Naive thymus-derived CD4-positive, alpha-beta T cell (primary cell): ENCODE measurements at regions of chr9 and their contacts with region 1.

Region 1: DNA sequence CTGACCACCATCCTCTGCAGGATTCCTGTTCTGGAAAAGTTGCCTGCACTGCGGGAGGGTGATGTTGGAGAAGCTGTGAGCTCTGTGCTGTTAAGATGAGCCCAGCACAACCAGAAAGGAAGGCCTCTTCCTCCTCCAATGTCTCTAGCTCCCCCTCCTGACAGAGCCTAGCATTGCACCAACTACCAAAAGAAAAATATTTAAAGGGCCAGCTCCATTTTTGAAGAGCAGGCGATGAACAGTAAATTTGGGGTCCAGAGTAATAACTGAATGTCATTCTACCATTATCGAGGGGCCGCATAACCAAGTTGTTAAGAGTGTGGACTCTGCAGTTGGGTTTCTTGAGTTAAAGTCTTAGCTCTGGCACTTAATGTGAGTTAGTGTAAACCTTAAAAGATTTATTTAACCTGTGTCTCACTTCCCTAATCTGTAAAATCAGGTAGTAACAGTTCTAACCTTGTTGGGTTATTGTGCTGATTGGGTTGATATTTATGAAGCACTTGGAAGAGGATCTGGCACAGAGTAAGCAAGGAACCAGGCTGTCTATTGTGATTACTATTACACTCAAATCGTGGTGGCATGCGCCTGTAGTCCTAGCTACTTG is 3.9 kb downstream of the TEX53 start:
- DNase-seq: peak; percentile 56 to 88 (median 81)
- ATAC-seq: peak; percentile 99
- H3K4me3 ChIP-seq: no peak overlapping the region
- H3K4me3 Mint-ChIP-seq: no peak overlapping the region
- H3K27ac ChIP-seq: no peak overlapping the region
- H3K27ac Mint-ChIP-seq: peak overlapping the region in 7 of 9 donors; percentile 16 to 81 (median 56)
- H3K4me1 ChIP-seq: peaks cover 0 to 23% of the 10 kb centered on the region in 2 donors
- H3K4me1 Mint-ChIP-seq: peaks cover 11 to 25% (median 21%) of the 10 kb centered on the region in 7 donors
- H3K27me3 ChIP-seq: no peaks in the 10 kb centered on the region
- H3K27me3 Mint-ChIP-seq: no peaks in the 10 kb centered on the region

Region 2: DNA sequence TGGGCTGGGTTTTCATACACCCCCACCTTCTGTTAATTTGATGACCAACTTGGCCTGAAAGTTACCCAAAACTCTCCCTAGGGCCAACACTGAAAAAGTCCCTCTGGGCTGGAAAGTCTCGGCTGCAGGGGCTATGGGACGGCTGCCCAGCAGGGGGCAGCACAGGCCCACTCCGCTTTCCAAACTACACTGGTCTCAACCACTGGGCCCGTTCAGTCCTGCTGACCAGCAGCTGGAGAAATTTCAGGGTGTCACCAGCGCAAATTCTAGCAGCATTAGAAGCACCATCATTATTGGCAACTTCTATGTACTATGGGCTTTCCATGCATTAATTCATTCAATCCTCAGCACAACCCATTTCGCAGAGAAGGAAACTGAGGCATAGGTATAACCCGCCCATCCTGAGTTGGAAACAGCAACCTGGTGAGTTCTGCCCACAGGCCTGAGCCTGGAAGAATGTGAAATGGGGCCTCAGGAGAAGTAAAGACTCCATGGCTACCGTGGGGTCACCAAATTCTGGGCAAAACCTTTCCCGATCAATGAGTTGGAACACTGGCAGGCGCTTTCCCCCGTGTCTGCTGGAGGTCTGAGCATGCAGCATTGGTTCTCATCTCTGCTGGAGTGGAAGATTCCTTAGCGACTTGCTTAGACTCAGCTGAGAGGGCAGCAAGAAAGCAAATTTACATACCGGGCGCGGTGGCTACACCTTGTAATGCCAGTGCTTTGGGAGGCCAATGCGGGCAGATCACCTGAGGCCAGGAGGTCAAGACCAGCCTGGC is 314.3 kb before region 1 on chr9:
- CTCF ChIA-PET with region 1: interaction called, 8 read pairs
- POLR2A ChIA-PET with region 1: no interaction called
- intact Hi-C with region 1: loop called in 1 of 2 experiments (anchors 10 kb)
- DNase-seq: peak in 8 of 9 donors; percentile 19 to 64 (median 50)
- ATAC-seq: peak; percentile 83
- H3K4me3 ChIP-seq: no peak overlapping the region
- H3K4me3 Mint-ChIP-seq: no peak overlapping the region
- H3K27ac ChIP-seq: peak overlapping the region; percentile 14
- H3K27ac Mint-ChIP-seq: peak overlapping the region in 6 of 9 donors; percentile 15 to 76 (median 67)
- H3K4me1 ChIP-seq: no peaks in the 10 kb centered on the region
- H3K4me1 Mint-ChIP-seq: peaks cover 8 to 37% (median 17%) of the 10 kb centered on the region in 7 donors
- H3K27me3 ChIP-seq: no peaks in the 10 kb centered on the region
- H3K27me3 Mint-ChIP-seq: no peaks in the 10 kb centered on the region

Region 3: DNA sequence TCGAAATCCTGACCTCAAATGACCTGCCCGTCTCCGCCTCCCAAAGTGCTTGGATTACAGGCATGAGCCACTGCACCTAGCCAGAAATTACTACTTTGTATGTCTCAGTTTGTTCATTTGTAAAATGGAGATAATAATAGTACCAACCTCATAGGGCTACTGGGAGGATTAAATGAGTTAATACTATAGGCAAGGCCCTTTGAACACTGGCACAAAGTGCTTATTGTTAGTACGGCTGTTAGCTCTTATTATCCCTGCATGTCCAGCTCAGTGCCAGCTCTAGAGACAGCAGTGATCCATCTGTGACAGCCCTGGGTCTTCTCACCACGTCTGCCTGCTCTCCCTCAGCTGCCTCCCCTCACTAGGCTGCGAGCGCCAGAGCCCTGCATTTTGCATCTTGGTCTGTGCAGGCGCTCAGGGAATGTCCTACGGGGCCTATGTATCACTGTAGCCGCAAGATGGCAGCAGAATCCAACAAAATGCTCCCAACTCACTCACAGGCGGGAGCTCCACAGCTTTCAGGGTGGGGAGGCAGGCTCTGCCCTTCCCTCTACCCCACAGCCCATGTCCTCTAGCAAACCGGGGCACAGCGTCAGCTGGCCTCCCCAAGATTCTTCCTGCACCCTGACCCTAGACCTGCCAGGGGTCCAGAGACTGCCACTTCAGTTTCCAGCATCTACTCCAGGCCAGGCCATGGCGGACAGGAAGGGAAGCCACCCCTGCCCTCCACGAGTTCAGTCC is 248.2 kb before region 1 on chr9:
- CTCF ChIA-PET with region 1: interaction called, 141 read pairs
- POLR2A ChIA-PET with region 1: interaction called, 22 read pairs
- intact Hi-C with region 1: loop called (anchors 1 kb)
- DNase-seq: peak; percentile 56 to 84 (median 80)
- ATAC-seq: peak; percentile 97
- H3K4me3 ChIP-seq: no peak overlapping the region
- H3K4me3 Mint-ChIP-seq: no peak overlapping the region
- H3K27ac ChIP-seq: no peak overlapping the region
- H3K27ac Mint-ChIP-seq: peak overlapping the region in 6 of 9 donors; percentile 16 to 91 (median 60)
- H3K4me1 ChIP-seq: peaks cover 4 to 11% of the 10 kb centered on the region in 2 donors
- H3K4me1 Mint-ChIP-seq: peaks cover 6 to 10% (median 6%) of the 10 kb centered on the region in 7 donors
- H3K27me3 ChIP-seq: no peaks in the 10 kb centered on the region
- H3K27me3 Mint-ChIP-seq: no peaks in the 10 kb centered on the region

Region 4: DNA sequence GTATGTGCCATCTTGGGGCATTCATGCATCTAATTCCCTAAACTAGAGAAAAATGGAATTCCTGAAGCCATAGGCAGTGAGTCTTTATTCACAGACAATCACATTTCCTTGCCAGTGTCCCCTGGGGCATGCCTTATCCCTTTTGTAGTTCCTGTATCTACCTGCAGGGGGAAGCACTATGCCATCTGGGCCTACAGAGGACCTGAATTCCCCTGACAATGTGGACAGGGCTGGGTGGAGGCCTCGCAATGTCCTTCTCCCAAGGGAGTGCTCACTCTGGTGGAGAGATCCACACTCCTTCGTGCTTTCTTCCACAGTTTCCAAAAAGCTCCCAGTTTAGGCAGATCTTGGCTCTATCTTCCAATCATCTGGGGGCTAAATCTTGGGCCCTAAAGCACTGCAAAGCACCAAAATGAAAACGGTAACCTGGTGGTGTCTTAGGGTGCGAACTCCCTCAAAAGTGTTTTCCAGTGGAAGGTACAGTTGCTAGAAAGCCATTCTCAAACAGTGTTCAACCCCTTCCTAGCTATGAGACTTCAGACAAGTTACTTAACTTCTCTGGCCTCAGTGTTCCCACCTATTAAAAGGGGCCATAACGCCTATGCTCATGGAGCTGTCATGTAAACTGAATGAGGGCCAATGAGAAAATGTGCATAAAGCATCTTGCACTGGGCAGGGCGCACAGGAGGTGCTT is 165.9 kb before region 1 on chr9:
- CTCF ChIA-PET with region 1: interaction called, 72 read pairs
- POLR2A ChIA-PET with region 1: interaction called, 7 read pairs
- intact Hi-C with region 1: loop called (anchors 1 kb)
- DNase-seq: peak; percentile 25 to 80 (median 62)
- ATAC-seq: peak; percentile 92
- H3K4me3 ChIP-seq: no peak overlapping the region
- H3K4me3 Mint-ChIP-seq: no peak overlapping the region
- H3K27ac ChIP-seq: no peak overlapping the region
- H3K27ac Mint-ChIP-seq: peak overlapping the region in 2 of 9 donors; percentile 8 to 57
- H3K4me1 ChIP-seq: peaks cover 0 to 9% of the 10 kb centered on the region in 2 donors
- H3K4me1 Mint-ChIP-seq: peaks cover 0 to 30% (median 0%) of the 10 kb centered on the region in 7 donors
- H3K27me3 ChIP-seq: no peaks in the 10 kb centered on the region
- H3K27me3 Mint-ChIP-seq: peaks cover 0 to 4% (median 0%) of the 10 kb centered on the region in 5 donors

Region 5: DNA sequence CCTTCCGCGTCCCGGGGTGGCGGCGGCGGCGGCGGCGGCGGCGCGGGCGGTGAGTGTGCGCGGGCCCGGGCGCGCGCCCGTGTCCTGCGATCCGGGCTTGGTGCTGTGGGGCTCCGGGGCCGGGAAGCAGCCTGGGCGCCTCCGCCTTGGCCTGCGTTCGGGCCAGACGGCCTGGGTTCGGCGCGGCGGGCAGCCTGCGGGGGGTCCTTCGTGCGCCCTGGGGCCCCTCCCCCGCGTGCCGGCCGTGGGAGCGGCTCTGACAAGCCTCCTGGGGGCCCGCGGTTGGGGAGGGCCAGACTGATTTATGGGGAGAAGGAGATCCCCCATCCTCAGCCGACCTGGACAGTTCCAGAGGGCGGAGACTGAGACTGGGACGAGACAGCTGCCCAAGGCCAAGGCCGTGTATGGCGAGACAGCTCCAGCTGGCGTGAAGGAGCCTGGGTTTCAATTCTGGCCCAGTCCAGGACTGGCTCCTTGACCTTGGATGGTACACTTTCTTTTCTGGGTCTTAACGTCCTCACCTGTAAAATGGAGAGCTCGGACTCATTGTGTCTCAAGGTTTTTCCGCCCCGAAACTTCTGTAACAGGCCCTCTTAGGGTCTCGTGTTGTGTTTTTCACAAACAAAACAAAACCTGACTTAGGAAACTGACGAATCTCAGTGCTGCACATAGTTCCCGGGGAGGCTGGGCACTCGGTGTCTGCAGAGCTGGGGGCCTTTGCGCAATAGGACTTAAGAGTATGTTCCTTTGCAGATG is 42.0 kb before region 1 on chr9:
- CTCF ChIA-PET with region 1: interaction called, 5 read pairs
- POLR2A ChIA-PET with region 1: interaction called, 6 read pairs
- intact Hi-C with region 1: loop called (anchors 5 kb)
- DNase-seq: peak in 5 of 9 donors; percentile 24 to 44 (median 31)
- ATAC-seq: peak; percentile 82
- H3K4me3 ChIP-seq: peak overlapping the region; percentile 85
- H3K4me3 Mint-ChIP-seq: peak overlapping the region; percentile 90 to 99 (median 92)
- H3K27ac ChIP-seq: peak overlapping the region; percentile 92
- H3K27ac Mint-ChIP-seq: peak overlapping the region; percentile 77 to 98 (median 95)
- H3K4me1 ChIP-seq: peaks cover 14 to 31% of the 10 kb centered on the region in 2 donors
- H3K4me1 Mint-ChIP-seq: peaks cover 34 to 63% (median 55%) of the 10 kb centered on the region in 7 donors
- H3K27me3 ChIP-seq: no peaks in the 10 kb centered on the region
- H3K27me3 Mint-ChIP-seq: no peaks in the 10 kb centered on the region

Region 6: GRCh38 chr9:114930056-114930812 is 276.6 kb after region 1 on chr9 and contains the start of gene TNFSF8:
- CTCF ChIA-PET with region 1: no interaction called
- POLR2A ChIA-PET with region 1: no interaction called
- intact Hi-C with region 1: no loop called
- DNase-seq: peak; percentile 22 to 89 (median 82)
- ATAC-seq: peak; percentile 93
- H3K4me3 ChIP-seq: peak within 1 kb of the TSS; percentile 87
- H3K4me3 Mint-ChIP-seq: peak within 1 kb of the TSS; percentile 78 to 100 (median 99)
- H3K27ac ChIP-seq: peak within 1 kb of the TSS; percentile 79
- H3K27ac Mint-ChIP-seq: peak within 1 kb of the TSS; percentile 93 to 100 (median 99)
- H3K4me1 ChIP-seq: peaks cover 21 to 27% of the 10 kb centered on the region in 2 donors
- H3K4me1 Mint-ChIP-seq: peaks cover 34 to 62% (median 51%) of the 10 kb centered on the region in 7 donors
- H3K27me3 ChIP-seq: no peaks in the 10 kb centered on the region
- H3K27me3 Mint-ChIP-seq: peaks cover 0 to 4% (median 0%) of the 10 kb centered on the region in 5 donors
- total RNA-seq, gene TNFSF8: 19.3 to 129 (median 31.5) TPM